ENCODE measurements at regions of chr10 and their contacts with region 1.

Region 1: DNA sequence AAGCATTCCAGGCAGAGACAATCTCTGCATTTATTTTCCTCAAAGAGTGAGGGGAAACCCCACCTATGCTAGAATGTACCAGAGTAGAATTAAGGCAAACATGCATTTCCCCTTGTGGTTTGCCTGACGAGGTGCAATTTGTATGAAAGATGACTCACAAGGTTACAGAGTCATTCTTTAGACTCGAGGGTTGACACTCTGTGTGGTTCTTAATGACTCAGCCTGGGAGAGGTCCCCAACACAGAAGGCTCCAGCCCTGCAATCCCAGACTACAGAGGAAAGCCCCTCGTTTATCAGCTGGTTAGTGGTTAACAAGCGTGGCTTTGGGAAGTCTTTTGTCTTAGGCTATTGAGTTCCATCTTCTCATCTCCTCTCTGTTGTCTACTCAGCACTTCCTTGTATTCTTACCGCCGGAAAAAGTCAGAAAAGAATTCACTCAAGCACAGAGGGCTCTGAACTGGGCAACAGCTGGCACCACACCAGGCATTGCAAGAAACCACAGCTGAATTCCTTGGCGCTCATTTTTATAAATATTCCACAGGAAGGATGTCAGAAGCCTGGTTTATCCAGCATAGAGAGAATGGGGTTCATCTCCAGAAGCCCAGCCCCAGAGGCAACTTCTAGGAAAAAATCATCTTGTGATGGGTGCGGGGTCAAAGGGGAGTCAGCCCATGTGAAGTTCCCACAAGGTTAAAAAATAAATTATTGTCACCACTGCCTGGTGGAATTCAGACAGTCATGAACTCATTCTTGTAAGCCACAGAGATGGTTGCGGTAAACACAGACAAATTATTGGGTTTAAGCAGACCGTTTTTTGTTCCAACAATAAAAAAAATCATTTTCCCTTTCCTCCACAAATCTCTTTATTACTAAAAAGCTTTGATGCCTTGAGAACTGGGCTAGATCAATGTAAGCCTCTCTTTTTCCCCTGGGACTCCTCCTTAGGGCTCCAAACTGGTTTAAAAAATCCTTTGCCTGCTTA is 24.5 kb upstream of the SVIL start:
- DNase-seq: peak; percentile 20 to 95 (median 65)
- ATAC-seq: peak; percentile 92
- H3K4me3 ChIP-seq: no peak overlapping the region
- H3K4me3 Mint-ChIP-seq: peak overlapping the region; percentile 50
- H3K27ac ChIP-seq: peak overlapping the region in 1 of 2 experiments; percentile 55
- H3K27ac Mint-ChIP-seq: peak overlapping the region; percentile 91
- H3K4me1 ChIP-seq: peaks cover 27% of the 10 kb centered on the region
- H3K4me1 Mint-ChIP-seq: peaks cover 27% of the 10 kb centered on the region
- H3K27me3 ChIP-seq: no peaks in the 10 kb centered on the region
- H3K27me3 Mint-ChIP-seq: no peaks in the 10 kb centered on the region
- CTCF ChIP-seq: peak; percentile 46

Region 2: GRCh38 chr10:29496341-29497162 is 162.7 kb before region 1 on chr10:
- CTCF ChIA-PET with region 1: no interaction called
- POLR2A ChIA-PET with region 1: no interaction called
- intact Hi-C with region 1: no loop called
- DNase-seq: peak; percentile 21 to 73 (median 45)
- ATAC-seq: no peak
- H3K4me3 ChIP-seq: no peak overlapping the region
- H3K4me3 Mint-ChIP-seq: no peak overlapping the region
- H3K27ac ChIP-seq: no peak overlapping the region
- H3K27ac Mint-ChIP-seq: no peak overlapping the region
- H3K4me1 ChIP-seq: no peaks in the 10 kb centered on the region
- H3K4me1 Mint-ChIP-seq: peaks cover 2% of the 10 kb centered on the region
- H3K27me3 ChIP-seq: no peaks in the 10 kb centered on the region
- H3K27me3 Mint-ChIP-seq: no peaks in the 10 kb centered on the region
- CTCF ChIP-seq: peak; percentile 96

Region 3: GRCh38 chr10:29588629-29589421 is 70.5 kb before region 1 on chr10:
- CTCF ChIA-PET with region 1: interaction called, 4 read pairs
- POLR2A ChIA-PET with region 1: no interaction called
- intact Hi-C with region 1: loop called in 1 of 2 experiments (anchors 1 kb)
- DNase-seq: no peak
- ATAC-seq: no peak
- H3K4me3 ChIP-seq: no peak overlapping the region
- H3K4me3 Mint-ChIP-seq: no peak overlapping the region
- H3K27ac ChIP-seq: no peak overlapping the region
- H3K27ac Mint-ChIP-seq: no peak overlapping the region
- H3K4me1 ChIP-seq: peaks cover 6% of the 10 kb centered on the region
- H3K4me1 Mint-ChIP-seq: peaks cover 11% of the 10 kb centered on the region
- H3K27me3 ChIP-seq: no peaks in the 10 kb centered on the region
- H3K27me3 Mint-ChIP-seq: no peaks in the 10 kb centered on the region
- CTCF ChIP-seq: no peak

Region 4: GRCh38 chr10:29635711-29636144 is 23.5 kb before region 1 on chr10:
- CTCF ChIA-PET with region 1: no interaction called
- POLR2A ChIA-PET with region 1: no interaction called
- intact Hi-C with region 1: loop called (anchors 1 to 2 kb)
- DNase-seq: peak in 5 of 9 experiments; percentile 15 to 53 (median 29)
- ATAC-seq: peak; percentile 35
- H3K4me3 ChIP-seq: no peak overlapping the region
- H3K4me3 Mint-ChIP-seq: peak overlapping the region; percentile 40
- H3K27ac ChIP-seq: peak overlapping the region in 1 of 2 experiments; percentile 41
- H3K27ac Mint-ChIP-seq: peak overlapping the region; percentile 69
- H3K4me1 ChIP-seq: peaks cover 25% of the 10 kb centered on the region
- H3K4me1 Mint-ChIP-seq: peaks cover 41% of the 10 kb centered on the region
- H3K27me3 ChIP-seq: no peaks in the 10 kb centered on the region
- H3K27me3 Mint-ChIP-seq: no peaks in the 10 kb centered on the region
- CTCF ChIP-seq: no peak

Region 5: GRCh38 chr10:29681676-29682448 is 22.6 kb after region 1 on chr10:
- CTCF ChIA-PET with region 1: interaction called, 5 read pairs
- POLR2A ChIA-PET with region 1: interaction called, 5 read pairs
- intact Hi-C with region 1: loop called (anchors 1 to 2 kb)
- DNase-seq: peak; percentile 15 to 90 (median 67)
- ATAC-seq: peak; percentile 95
- H3K4me3 ChIP-seq: peak overlapping the region; percentile 14 to 25
- H3K4me3 Mint-ChIP-seq: peak overlapping the region; percentile 74
- H3K27ac ChIP-seq: peak overlapping the region; percentile 42 to 81
- H3K27ac Mint-ChIP-seq: peak overlapping the region; percentile 92
- H3K4me1 ChIP-seq: peaks cover 66% of the 10 kb centered on the region
- H3K4me1 Mint-ChIP-seq: peaks cover 88% of the 10 kb centered on the region
- H3K27me3 ChIP-seq: no peaks in the 10 kb centered on the region
- H3K27me3 Mint-ChIP-seq: no peaks in the 10 kb centered on the region
- CTCF ChIP-seq: no peak

Region 6: GRCh38 chr10:30027057-30028005 is 368.1 kb after region 1 on chr10:
- CTCF ChIA-PET with region 1: no interaction called
- POLR2A ChIA-PET with region 1: no interaction called
- intact Hi-C with region 1: loop called in 1 of 2 experiments (anchors 5 kb)
- DNase-seq: peak; percentile 79 to 96 (median 85)
- ATAC-seq: peak; percentile 88
- H3K4me3 ChIP-seq: peak overlapping the region; percentile 33 to 53
- H3K4me3 Mint-ChIP-seq: peak overlapping the region; percentile 62
- H3K27ac ChIP-seq: peak overlapping the region in 1 of 2 experiments; percentile 41
- H3K27ac Mint-ChIP-seq: peak overlapping the region; percentile 80
- H3K4me1 ChIP-seq: peaks cover 37% of the 10 kb centered on the region
- H3K4me1 Mint-ChIP-seq: peaks cover 35% of the 10 kb centered on the region
- H3K27me3 ChIP-seq: peaks cover 24 to 34% of the 10 kb centered on the region in 2 experiments
- H3K27me3 Mint-ChIP-seq: peaks cover 55% of the 10 kb centered on the region
- CTCF ChIP-seq: peak; percentile 32

Measured in CD8-positive, alpha-beta T cell (primary cell).